ENCODE measurements at regions of chr16 and their contacts with region 1.

Region 1: DNA sequence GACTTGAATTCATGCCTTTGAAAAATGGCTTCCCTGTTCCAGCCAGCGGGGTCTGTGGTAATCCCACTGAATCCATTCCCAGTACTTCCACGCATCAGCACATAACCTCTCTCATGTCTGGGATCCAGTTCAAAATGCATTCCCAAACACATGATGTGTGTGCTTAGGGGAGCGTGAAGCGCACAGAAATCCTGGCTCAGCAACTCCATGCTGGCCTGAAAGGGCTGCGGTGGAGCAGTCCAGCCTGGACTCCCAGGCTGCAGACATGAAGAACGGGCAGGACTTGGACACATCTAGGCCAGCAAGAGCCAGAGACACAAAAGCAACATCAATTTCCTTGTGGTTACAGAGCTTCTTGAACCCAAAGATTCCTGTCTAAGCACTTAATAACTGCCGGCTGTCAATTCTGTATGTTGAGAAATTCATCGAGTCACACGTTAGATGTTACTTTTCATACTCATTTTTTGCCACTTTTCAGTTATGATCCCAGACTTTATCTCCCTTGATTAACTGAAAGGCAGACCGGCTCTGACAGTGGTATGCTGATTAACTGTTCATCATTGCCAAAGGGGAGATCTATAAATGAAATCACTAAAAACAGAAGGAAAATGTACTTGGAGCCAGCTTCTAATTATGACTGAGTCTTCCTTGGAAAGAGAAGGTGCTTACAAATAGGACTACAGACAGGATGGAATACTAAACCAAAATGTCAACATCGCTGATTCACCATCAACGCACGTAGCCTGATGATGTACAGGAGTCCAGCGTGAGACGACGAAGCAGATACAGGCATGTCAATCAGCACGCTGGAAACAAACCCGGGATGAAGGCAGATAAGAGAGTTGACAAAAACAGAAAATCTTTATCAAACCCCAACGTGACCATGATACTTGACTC is 23.0 kb downstream of the NSMCE1 start:
- DNase-seq: no peak
- H3K4me3 ChIP-seq: no peak overlapping the region
- H3K27ac ChIP-seq: no peak overlapping the region
- H3K4me1 ChIP-seq: peaks cover 33% of the 10 kb centered on the region
- H3K27me3 ChIP-seq: no peaks in the 10 kb centered on the region
- CTCF ChIP-seq: no peak

Region 2: GRCh38 chr16:27293343-27293742 is 47.8 kb after region 1 on chr16:
- CTCF ChIA-PET with region 1: no interaction called
- POLR2A ChIA-PET with region 1: no interaction called
- intact Hi-C with region 1: loop called (anchors 1 kb)
- DNase-seq: no peak
- H3K4me3 ChIP-seq: no peak overlapping the region
- H3K27ac ChIP-seq: no peak overlapping the region
- H3K4me1 ChIP-seq: no peaks in the 10 kb centered on the region
- H3K27me3 ChIP-seq: no peaks in the 10 kb centered on the region
- CTCF ChIP-seq: no peak

Measured in PC-9 (cell line).